ENCODE measurements at regions of chr9 and their contacts with region 1.

Region 1: DNA sequence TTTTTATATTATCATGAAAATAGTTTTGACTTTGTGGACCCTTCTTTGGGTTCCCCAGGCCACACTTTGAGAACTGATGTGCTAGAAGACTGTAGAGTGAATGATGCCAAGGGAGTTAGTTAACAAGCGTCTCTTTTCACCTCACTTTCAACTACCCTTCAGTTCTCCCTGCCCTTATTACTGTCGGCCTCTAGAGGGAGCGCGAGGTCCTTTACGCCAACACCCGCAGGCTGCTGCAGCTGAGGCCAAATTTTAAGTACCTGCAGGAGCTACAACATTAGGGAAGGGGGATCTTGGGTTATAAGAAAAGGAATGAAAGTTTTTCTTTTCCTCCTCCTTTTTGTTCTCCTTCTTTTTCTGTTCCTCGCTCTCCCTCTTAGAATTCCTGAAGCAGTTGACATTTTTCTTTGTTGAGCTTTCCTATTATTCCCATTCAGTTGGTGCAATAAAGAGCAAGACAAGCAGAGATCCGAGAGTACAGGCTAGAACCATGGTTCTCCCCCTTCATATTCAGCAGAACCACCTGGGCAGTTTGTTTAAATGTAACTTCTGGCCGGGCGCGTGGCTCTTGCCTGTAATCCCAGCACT is 84.0 kb downstream of the ZFAND5 start:
- DNase-seq: peak; percentile 82
- ATAC-seq: peak; percentile 90

Region 2: DNA sequence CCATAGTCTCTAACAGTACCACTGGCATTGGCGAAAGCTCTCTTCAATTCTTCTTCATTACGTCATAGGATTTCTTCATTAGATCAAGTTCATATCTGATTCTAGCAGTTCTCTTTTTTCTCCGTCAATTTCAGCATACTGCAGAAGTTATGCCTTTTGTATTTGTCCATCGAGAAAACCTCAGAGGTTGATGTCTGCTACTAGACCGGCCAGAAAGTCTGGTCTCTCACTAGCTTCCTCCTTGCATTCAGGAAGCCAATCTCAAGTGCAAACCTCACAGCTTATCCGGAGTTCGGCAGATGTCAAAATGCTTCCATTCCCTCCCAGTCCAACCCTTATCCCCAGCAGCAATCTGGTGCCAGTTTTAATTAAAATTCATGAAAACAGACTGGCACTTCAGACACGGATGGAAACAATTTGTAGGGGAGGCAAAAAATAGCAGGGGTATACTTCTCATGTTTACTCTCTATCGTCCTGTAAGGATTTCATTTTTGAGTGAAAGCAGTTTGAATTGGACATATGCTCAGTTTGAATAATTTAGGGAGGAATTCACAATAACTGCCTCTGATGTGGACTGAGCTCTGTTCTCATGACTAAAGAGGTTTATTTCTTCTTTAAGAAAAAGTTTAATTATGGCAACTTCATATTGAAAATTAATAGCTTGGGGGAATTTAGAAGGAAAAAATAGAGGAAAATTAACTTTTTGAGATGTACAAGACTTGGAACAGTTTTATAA is 184.0 kb after region 1 on chr9:
- intact Hi-C with region 1: no loop called
- DNase-seq: no peak
- ATAC-seq: peak; percentile 65

Region 3: GRCh38 chr9:72592502-72593403 is 311.7 kb after region 1 on chr9:
- intact Hi-C with region 1: loop called (anchors 5 kb)
- DNase-seq: no peak
- ATAC-seq: peak; percentile 90

Region 4: GRCh38 chr9:72827950-72828731 is 547.1 kb after region 1 on chr9:
- intact Hi-C with region 1: loop called (anchors 5 kb)
- DNase-seq: no peak
- ATAC-seq: peak; percentile 56